B cell (primary cell): ENCODE measurements at regions of chr19 and their contacts with region 1.

Region 1: DNA sequence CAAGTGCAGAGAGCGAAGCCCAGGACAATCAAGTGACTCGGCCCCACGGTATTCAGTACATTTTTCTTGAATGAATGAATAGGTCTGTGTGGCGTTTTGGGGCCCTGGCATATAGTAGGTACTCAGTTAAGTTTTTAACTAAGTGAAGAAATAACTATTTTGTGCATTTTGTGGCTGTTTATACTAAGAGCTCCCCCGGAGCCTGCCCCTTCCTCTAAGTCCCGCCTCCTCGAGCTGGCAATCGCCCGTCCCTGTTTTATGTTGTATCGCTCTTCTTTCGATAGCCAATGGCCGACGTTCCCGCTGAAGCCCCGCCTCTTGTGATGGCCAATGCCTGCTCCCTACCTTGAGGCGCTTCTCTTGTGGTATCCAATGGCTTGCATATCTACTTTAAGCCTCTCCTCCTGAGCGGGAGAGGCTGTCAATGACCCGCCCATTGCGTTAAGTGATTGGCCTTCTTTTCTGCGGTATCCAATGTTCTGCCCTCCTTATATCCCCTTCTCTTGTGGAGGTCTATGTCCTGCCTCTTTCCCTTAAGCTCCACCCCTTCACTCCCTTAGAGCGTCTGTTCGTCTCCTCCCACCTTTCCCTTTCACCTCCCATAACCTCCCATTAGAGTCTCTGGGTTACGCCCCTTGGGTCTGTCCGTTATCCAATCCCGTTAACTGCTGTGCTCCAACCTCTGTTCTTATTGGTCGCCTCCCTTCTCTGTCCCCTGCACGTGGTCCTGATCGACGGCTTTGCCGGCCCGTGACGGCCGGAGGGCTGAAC is 509 bp upstream of the HDGFL2 start:
- DNase-seq: peak; percentile 100
- ATAC-seq: peak; percentile 85
- H3K4me3 ChIP-seq: peak overlapping the region; percentile 76 to 98 (median 85)
- H3K4me3 Mint-ChIP-seq: no peak overlapping the region
- H3K27ac ChIP-seq: peak overlapping the region; percentile 68 to 74
- H3K27ac Mint-ChIP-seq: no peak overlapping the region
- H3K4me1 ChIP-seq: peaks cover 20 to 31% of the 10 kb centered on the region in 2 donors
- H3K4me1 Mint-ChIP-seq: peaks cover 22% of the 10 kb centered on the region
- H3K27me3 ChIP-seq: no peaks in the 10 kb centered on the region
- H3K27me3 Mint-ChIP-seq: no peaks in the 10 kb centered on the region
- CTCF ChIP-seq: no peak

Region 2: GRCh38 chr19:3505598-3506383 is 965.8 kb before region 1 on chr19 and contains the start of gene FZR1:
- CTCF ChIA-PET with region 1: no interaction called
- POLR2A ChIA-PET with region 1: no interaction called
- intact Hi-C with region 1: loop called (anchors 10 kb)
- DNase-seq: peak; percentile 100
- ATAC-seq: peak; percentile 91
- H3K4me3 ChIP-seq: peak within 1 kb of the TSS; percentile 74 to 95 (median 77)
- H3K4me3 Mint-ChIP-seq: peak within 1 kb of the TSS; percentile 92
- H3K27ac ChIP-seq: peak within 1 kb of the TSS; percentile 92 to 94
- H3K27ac Mint-ChIP-seq: peak within 1 kb of the TSS; percentile 99
- H3K4me1 ChIP-seq: peaks cover 12 to 21% of the 10 kb centered on the region in 2 donors
- H3K4me1 Mint-ChIP-seq: peaks cover 49% of the 10 kb centered on the region
- H3K27me3 ChIP-seq: no peaks in the 10 kb centered on the region
- H3K27me3 Mint-ChIP-seq: no peaks in the 10 kb centered on the region
- CTCF ChIP-seq: no peak
- total RNA-seq, gene FZR1: 96.1 and 105 TPM in 2 replicates

Region 3: DNA sequence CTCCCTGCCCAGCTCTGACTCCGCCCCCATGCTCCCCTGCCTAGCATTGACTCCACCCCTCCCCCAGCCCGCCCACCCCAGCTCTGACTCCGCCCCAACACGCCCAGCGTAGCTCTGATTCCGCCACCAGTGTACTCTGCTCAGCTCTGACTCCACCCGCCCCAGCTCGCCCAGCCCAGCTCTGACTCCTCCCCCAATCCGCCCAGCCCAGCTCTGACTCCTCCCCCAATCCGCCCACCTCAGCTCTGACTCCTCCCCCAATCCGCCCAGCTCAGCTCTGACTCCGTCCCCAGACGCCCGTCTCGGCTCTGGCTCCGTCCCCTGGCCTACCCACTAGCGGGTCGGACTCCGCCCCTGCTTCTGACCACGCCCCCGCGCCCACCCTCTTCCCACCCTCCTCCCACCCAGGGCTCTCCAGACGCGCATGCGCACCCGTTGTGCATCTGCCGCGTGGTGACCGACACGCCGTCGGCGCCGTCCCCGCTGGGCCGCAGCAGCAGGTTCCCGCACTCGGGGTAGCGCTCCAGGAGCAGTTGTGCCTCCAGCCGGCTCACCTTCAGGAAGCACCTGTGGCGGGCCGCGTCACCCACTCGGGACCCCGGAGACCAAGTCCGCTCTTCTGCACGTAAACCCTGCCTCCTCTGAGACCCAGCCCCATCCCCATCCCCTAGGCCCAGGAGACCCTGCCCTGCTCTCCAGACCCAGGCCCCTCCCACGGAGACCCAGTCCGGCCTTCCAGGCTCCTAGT is 143.2 kb before region 1 on chr19:
- CTCF ChIA-PET with region 1: no interaction called
- POLR2A ChIA-PET with region 1: no interaction called
- intact Hi-C with region 1: loop called (anchors 5 kb)
- DNase-seq: peak; percentile 93
- ATAC-seq: peak; percentile 86
- H3K4me3 ChIP-seq: peak overlapping the region in 4 of 5 experiments; percentile 37 to 54 (median 46)
- H3K4me3 Mint-ChIP-seq: peak overlapping the region; percentile 79
- H3K27ac ChIP-seq: peak overlapping the region in 1 of 2 donors; percentile 36
- H3K27ac Mint-ChIP-seq: peak overlapping the region; percentile 85
- H3K4me1 ChIP-seq: peaks cover 18 to 31% of the 10 kb centered on the region in 2 donors
- H3K4me1 Mint-ChIP-seq: peaks cover 28% of the 10 kb centered on the region
- H3K27me3 ChIP-seq: peaks cover 0 to 11% (median 0%) of the 10 kb centered on the region in 4 experiments
- H3K27me3 Mint-ChIP-seq: no peaks in the 10 kb centered on the region
- CTCF ChIP-seq: no peak

Region 4: GRCh38 chr19:4369888-4370260 is 101.7 kb before region 1 on chr19:
- CTCF ChIA-PET with region 1: interaction called, 7 read pairs
- POLR2A ChIA-PET with region 1: interaction called, 3 read pairs
- intact Hi-C with region 1: loop called (anchors 1 kb)
- DNase-seq: peak; percentile 70
- ATAC-seq: peak; percentile 48
- H3K4me3 ChIP-seq: peak overlapping the region in 4 of 5 experiments; percentile 40 to 68 (median 50)
- H3K4me3 Mint-ChIP-seq: peak overlapping the region; percentile 83
- H3K27ac ChIP-seq: peak overlapping the region; percentile 84 to 95
- H3K27ac Mint-ChIP-seq: peak overlapping the region; percentile 96
- H3K4me1 ChIP-seq: peaks cover 69 to 76% of the 10 kb centered on the region in 2 donors
- H3K4me1 Mint-ChIP-seq: peaks cover 62% of the 10 kb centered on the region
- H3K27me3 ChIP-seq: no peaks in the 10 kb centered on the region
- H3K27me3 Mint-ChIP-seq: no peaks in the 10 kb centered on the region
- CTCF ChIP-seq: peak; percentile 61

Region 5: DNA sequence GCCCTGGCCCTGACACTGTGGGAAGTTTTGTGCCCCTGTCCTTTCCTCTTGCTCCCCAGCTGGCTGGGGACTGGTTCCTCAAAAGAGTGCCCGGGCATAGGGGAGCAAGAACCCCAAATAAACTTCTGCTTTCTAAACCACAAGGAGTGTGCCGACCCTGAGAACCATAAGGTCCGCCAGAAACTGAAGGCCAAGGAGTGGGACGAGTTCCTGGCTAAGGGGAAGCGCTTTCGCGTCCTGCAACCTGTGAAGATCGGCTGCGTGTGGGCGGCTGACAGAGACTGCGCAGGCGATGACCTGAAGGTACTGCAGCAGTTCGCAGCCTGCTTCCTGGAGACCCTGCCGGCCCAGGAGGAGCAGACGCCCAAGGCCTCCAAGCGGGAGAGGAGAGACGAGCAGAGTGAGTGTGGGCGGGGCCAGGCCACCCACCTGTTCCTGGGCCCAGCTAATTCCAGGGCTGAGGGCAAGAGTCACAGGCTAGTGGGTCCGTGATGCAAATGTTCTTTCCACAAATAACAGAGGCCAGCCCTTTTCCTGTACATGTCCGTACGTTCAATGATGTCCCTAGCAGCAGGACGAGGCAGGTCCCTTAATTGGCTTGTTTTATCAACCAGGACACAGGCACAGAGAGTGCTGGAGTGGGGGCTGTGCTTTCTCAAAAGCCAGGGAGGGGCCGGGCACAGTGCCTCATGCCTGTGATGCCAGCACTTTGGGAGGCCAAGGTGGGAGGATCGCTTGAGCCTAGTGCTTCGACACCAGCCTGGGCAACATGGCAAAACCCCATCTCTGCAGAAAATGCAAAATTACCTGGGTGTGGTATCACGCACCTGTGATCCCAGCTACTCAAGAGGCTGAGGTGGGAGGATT is 39.5 kb before region 1 on chr19:
- CTCF ChIA-PET with region 1: no interaction called
- POLR2A ChIA-PET with region 1: no interaction called
- intact Hi-C with region 1: no loop called
- DNase-seq: peak; percentile 80
- ATAC-seq: peak; percentile 56
- H3K4me3 ChIP-seq: peak overlapping the region in 4 of 5 experiments; percentile 11 to 46 (median 28)
- H3K4me3 Mint-ChIP-seq: peak overlapping the region; percentile 85
- H3K27ac ChIP-seq: peak overlapping the region; percentile 40 to 78
- H3K27ac Mint-ChIP-seq: peak overlapping the region; percentile 97
- H3K4me1 ChIP-seq: peaks cover 18 to 40% of the 10 kb centered on the region in 2 donors
- H3K4me1 Mint-ChIP-seq: peaks cover 30% of the 10 kb centered on the region
- H3K27me3 ChIP-seq: no peaks in the 10 kb centered on the region
- H3K27me3 Mint-ChIP-seq: no peaks in the 10 kb centered on the region
- CTCF ChIP-seq: no peak

Region 6: GRCh38 chr19:4457654-4458395 is 13.8 kb before region 1 on chr19 and contains the start of gene UBXN6:
- CTCF ChIA-PET with region 1: interaction called, 3 read pairs
- POLR2A ChIA-PET with region 1: interaction called, 7 read pairs
- intact Hi-C with region 1: loop called (anchors 1 kb)
- DNase-seq: peak; percentile 98
- ATAC-seq: peak; percentile 95
- H3K4me3 ChIP-seq: peak within 1 kb of the TSS; percentile 52 to 76 (median 64)
- H3K4me3 Mint-ChIP-seq: peak within 1 kb of the TSS; percentile 89
- H3K27ac ChIP-seq: peak within 1 kb of the TSS; percentile 60 to 74
- H3K27ac Mint-ChIP-seq: peak within 1 kb of the TSS; percentile 95
- H3K4me1 ChIP-seq: peaks cover 9 to 19% of the 10 kb centered on the region in 2 donors
- H3K4me1 Mint-ChIP-seq: peaks cover 24% of the 10 kb centered on the region
- H3K27me3 ChIP-seq: no peaks in the 10 kb centered on the region
- H3K27me3 Mint-ChIP-seq: no peaks in the 10 kb centered on the region
- CTCF ChIP-seq: no peak
- total RNA-seq, gene UBXN6: 75.8 and 82.0 TPM in 2 replicates

Region 7: DNA sequence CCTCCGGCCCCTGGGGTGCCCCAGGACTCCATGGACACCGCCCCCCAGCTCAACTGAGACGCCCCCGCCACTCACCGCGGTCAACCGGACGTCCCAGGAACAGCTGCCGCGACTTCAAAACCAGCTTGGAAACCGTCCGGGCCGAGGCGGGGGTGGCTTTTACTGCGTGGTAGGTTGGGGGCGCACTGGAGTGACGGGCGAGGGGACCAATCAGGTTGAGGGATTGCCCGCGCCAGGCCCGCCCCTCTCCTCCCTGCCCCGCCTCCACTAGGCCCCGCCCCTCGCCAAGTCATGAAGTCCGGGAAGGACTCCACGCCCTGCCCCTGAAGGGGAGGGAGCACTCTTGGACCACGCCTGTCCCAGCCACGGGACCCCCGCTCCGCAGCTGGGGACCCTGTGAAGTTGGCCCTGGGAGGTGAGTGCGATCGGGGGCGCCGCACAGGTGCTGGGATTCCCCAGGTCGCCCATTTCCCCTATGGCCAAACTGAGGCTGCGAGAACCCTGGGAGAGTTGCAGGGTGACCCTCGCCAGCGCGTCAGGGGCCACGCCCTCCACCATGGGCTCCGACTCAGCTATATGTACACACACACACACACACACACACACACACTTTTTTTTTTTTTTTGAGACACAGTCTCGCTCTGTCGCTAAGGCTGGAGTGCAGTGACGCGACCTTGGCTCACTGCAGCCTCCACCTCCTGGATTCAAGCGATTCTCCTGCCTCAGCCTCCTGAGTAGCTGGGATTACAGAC is 396.1 kb after region 1 on chr19 and contains the start of gene PLIN3:
- CTCF ChIA-PET with region 1: no interaction called
- POLR2A ChIA-PET with region 1: no interaction called
- intact Hi-C with region 1: loop called (anchors 5 kb)
- DNase-seq: peak; percentile 94
- ATAC-seq: peak; percentile 95
- H3K4me3 ChIP-seq: peak within 1 kb of the TSS; percentile 66 to 87 (median 80)
- H3K4me3 Mint-ChIP-seq: peak within 1 kb of the TSS; percentile 88
- H3K27ac ChIP-seq: peak within 1 kb of the TSS; percentile 56 to 77
- H3K27ac Mint-ChIP-seq: peak within 1 kb of the TSS; percentile 82
- H3K4me1 ChIP-seq: peaks cover 6 to 28% of the 10 kb centered on the region in 2 donors
- H3K4me1 Mint-ChIP-seq: peaks cover 22% of the 10 kb centered on the region
- H3K27me3 ChIP-seq: no peaks in the 10 kb centered on the region
- H3K27me3 Mint-ChIP-seq: peaks cover 2% of the 10 kb centered on the region
- CTCF ChIP-seq: no peak
- total RNA-seq, gene PLIN3: 26.5 and 34.3 TPM in 2 replicates